ENCODE measurements at regions of chr17 and their contacts with region 1.

Region 1: DNA sequence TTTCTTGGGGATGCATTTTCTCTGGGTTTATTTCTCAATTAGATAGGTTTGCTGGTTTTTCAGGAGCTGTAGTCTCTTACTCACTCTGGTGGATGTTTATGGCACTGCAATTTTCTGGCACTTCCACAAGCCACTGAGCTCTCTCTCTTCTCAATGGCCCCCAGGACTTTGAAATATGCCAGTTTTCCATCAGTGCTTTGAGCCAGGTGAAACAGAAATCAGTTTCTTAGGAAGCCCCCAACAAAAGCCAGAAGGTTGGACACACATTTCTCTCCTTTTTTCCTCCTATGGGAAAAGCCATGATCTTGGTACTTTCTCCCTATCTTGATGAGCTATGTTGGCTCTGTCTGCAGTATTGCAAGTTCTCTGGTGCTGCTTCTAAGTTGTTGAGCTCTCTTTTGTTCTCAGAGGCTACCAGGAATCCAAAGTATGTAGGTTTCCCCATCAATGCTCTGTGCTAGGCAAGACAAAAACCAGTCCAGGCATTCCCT is 90.7 kb upstream of the SMIM36 start:
- DNase-seq: peak; percentile 34 to 44 (median 36)
- H3K4me3 ChIP-seq: no peak overlapping the region
- H3K4me3 Mint-ChIP-seq: no peak overlapping the region
- H3K27ac ChIP-seq: no peak overlapping the region
- H3K27ac Mint-ChIP-seq: no peak overlapping the region
- H3K4me1 ChIP-seq: no peaks in the 10 kb centered on the region
- H3K4me1 Mint-ChIP-seq: no peaks in the 10 kb centered on the region
- H3K27me3 ChIP-seq: no peaks in the 10 kb centered on the region
- H3K27me3 Mint-ChIP-seq: peaks cover 5 to 11% of the 10 kb centered on the region in 2 donors

Region 2: GRCh38 chr17:55513885-55514591 is 87.9 kb before region 1 on chr17:
- CTCF ChIA-PET with region 1: interaction called, 16 read pairs
- POLR2A ChIA-PET with region 1: no interaction called
- intact Hi-C with region 1: no loop called
- DNase-seq: peak; percentile 54 to 66 (median 58)
- H3K4me3 ChIP-seq: no peak overlapping the region
- H3K4me3 Mint-ChIP-seq: no peak overlapping the region
- H3K27ac ChIP-seq: no peak overlapping the region
- H3K27ac Mint-ChIP-seq: no peak overlapping the region
- H3K4me1 ChIP-seq: no peaks in the 10 kb centered on the region
- H3K4me1 Mint-ChIP-seq: peaks cover 0 to 3% (median 0%) of the 10 kb centered on the region in 4 donors
- H3K27me3 ChIP-seq: peaks cover 6% of the 10 kb centered on the region
- H3K27me3 Mint-ChIP-seq: peaks cover 2 to 4% of the 10 kb centered on the region in 2 donors

Region 3: DNA sequence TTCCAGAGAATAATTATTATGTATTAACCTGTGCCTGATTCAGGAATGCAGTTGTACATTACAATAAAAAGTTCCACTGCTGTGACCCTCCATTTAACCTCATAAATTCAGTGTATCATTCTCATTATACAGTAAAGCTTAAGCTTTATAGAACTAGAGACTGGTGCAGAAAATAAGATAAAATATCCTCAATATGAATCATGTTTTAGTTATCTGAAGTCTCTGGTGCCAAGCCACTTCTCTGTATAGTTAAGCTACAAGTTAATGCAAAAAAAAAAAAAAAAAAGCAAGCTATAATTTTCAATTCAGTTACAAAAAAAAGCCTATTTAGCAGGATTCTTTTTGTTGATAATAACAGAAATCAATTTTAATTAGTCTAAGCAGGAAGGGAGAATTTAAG is 68.3 kb before region 1 on chr17:
- CTCF ChIA-PET with region 1: interaction called, 167 read pairs
- POLR2A ChIA-PET with region 1: no interaction called
- intact Hi-C with region 1: no loop called
- DNase-seq: no peak
- H3K4me3 ChIP-seq: no peak overlapping the region
- H3K4me3 Mint-ChIP-seq: no peak overlapping the region
- H3K27ac ChIP-seq: no peak overlapping the region
- H3K27ac Mint-ChIP-seq: no peak overlapping the region
- H3K4me1 ChIP-seq: no peaks in the 10 kb centered on the region
- H3K4me1 Mint-ChIP-seq: no peaks in the 10 kb centered on the region
- H3K27me3 ChIP-seq: no peaks in the 10 kb centered on the region
- H3K27me3 Mint-ChIP-seq: peaks cover 2 to 4% of the 10 kb centered on the region in 2 donors

Region 4: GRCh38 chr17:55549140-55549539 is 52.8 kb before region 1 on chr17:
- CTCF ChIA-PET with region 1: interaction called, 13 read pairs
- POLR2A ChIA-PET with region 1: interaction called, 3 read pairs
- intact Hi-C with region 1: loop called (anchors 1 kb)
- DNase-seq: peak in 1 of 5 donors; percentile 5
- H3K4me3 ChIP-seq: no peak overlapping the region
- H3K4me3 Mint-ChIP-seq: no peak overlapping the region
- H3K27ac ChIP-seq: no peak overlapping the region
- H3K27ac Mint-ChIP-seq: no peak overlapping the region
- H3K4me1 ChIP-seq: no peaks in the 10 kb centered on the region
- H3K4me1 Mint-ChIP-seq: peaks cover 0 to 1% (median 0%) of the 10 kb centered on the region in 4 donors
- H3K27me3 ChIP-seq: no peaks in the 10 kb centered on the region
- H3K27me3 Mint-ChIP-seq: peaks cover 4 to 12% of the 10 kb centered on the region in 2 donors

Region 5: GRCh38 chr17:55576996-55577586 is 24.8 kb before region 1 on chr17:
- CTCF ChIA-PET with region 1: interaction called, 10 read pairs
- POLR2A ChIA-PET with region 1: no interaction called
- intact Hi-C with region 1: no loop called
- DNase-seq: peak; percentile 48 to 67 (median 54)
- H3K4me3 ChIP-seq: peak overlapping the region; percentile 55 to 57
- H3K4me3 Mint-ChIP-seq: no peak overlapping the region
- H3K27ac ChIP-seq: peak overlapping the region; percentile 47
- H3K27ac Mint-ChIP-seq: no peak overlapping the region
- H3K4me1 ChIP-seq: peaks cover 30% of the 10 kb centered on the region
- H3K4me1 Mint-ChIP-seq: peaks cover 8 to 14% (median 9%) of the 10 kb centered on the region in 4 donors
- H3K27me3 ChIP-seq: no peaks in the 10 kb centered on the region
- H3K27me3 Mint-ChIP-seq: no peaks in the 10 kb centered on the region

Region 6: GRCh38 chr17:55612691-55613141 is 10.8 kb after region 1 on chr17:
- CTCF ChIA-PET with region 1: interaction called, 21 read pairs
- POLR2A ChIA-PET with region 1: no interaction called
- intact Hi-C with region 1: no loop called
- DNase-seq: no peak
- H3K4me3 ChIP-seq: no peak overlapping the region
- H3K4me3 Mint-ChIP-seq: no peak overlapping the region
- H3K27ac ChIP-seq: no peak overlapping the region
- H3K27ac Mint-ChIP-seq: no peak overlapping the region
- H3K4me1 ChIP-seq: no peaks in the 10 kb centered on the region
- H3K4me1 Mint-ChIP-seq: no peaks in the 10 kb centered on the region
- H3K27me3 ChIP-seq: no peaks in the 10 kb centered on the region
- H3K27me3 Mint-ChIP-seq: peaks cover 0 to 1% of the 10 kb centered on the region in 2 donors

Region 7: DNA sequence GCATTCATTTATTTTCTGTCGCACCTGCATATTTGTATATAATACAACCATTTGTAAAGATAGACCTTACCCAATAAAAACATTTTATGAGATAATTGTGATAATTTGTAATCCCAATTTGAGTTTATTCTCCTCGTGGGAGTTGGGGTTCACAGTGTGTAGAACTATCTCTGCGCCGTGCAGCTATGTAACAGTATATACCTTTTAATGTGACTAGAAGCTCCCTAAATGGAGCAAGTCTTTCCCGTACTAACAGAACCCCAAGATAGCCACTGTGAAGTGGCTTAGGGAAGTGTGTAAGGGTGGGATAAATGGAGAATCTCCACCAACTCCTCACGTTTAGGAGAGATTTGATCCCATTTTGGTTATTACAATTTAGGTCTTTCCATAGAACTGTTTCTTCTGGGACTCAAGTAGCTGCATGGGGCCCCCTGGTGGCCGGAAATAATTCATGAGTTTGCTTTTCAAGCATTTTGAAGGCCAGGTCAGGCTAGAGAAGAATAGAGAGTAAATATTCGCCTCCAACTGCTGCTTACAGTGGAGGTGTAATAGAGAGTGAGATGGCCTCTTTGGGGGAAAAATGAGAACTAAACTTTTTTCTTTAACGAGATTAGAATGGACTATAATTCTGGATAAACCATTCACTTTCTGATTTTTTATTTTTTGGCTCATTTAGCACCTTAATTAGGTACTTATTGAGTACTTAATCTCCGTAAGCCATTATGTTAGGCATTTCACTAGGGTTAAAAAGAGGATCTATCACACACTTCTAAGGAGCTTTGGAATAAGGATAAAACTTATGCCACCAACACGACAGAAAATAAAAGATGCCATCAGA is 116.2 kb after region 1 on chr17:
- CTCF ChIA-PET with region 1: interaction called, 12 read pairs
- POLR2A ChIA-PET with region 1: no interaction called
- intact Hi-C with region 1: no loop called
- DNase-seq: peak; percentile 38 to 54 (median 39)
- H3K4me3 ChIP-seq: no peak overlapping the region
- H3K4me3 Mint-ChIP-seq: no peak overlapping the region
- H3K27ac ChIP-seq: no peak overlapping the region
- H3K27ac Mint-ChIP-seq: no peak overlapping the region
- H3K4me1 ChIP-seq: no peaks in the 10 kb centered on the region
- H3K4me1 Mint-ChIP-seq: no peaks in the 10 kb centered on the region
- H3K27me3 ChIP-seq: no peaks in the 10 kb centered on the region
- H3K27me3 Mint-ChIP-seq: peaks cover 17 to 21% of the 10 kb centered on the region in 2 donors